Activated B cell treated with CpG ODN at 0.5 μM for 24 hours (primary cell): ENCODE measurements at regions of chr3 and their contacts with region 1.

Region 1: DNA sequence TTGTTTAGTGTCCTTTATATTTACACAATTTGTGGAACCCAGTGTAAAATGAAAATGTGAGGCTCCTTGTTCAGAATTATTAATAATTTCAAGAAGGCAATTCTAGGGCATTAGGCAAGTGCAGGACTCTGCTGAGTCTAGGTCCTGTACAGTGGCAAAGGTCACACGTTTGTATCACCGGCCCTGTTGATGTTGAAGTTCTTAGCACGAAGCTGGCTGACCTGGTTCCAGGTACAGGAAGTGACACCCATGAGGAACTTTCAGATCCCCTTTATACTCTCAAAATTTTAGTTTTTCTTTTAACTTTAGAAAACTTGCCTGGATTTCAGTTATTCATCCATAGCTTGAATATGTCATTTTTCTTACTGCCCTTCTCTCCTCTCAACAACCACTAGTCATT is 349.4 kb downstream of the CNTN6 start:
- DNase-seq: no peak
- ATAC-seq: peak; percentile 76
- H3K4me3 Mint-ChIP-seq: no peak overlapping the region
- H3K27ac Mint-ChIP-seq: peak overlapping the region; percentile 46
- H3K4me1 Mint-ChIP-seq: peaks cover 17% of the 10 kb centered on the region
- H3K27me3 Mint-ChIP-seq: no peaks in the 10 kb centered on the region
- CTCF ChIP-seq: no peak

Region 2: DNA sequence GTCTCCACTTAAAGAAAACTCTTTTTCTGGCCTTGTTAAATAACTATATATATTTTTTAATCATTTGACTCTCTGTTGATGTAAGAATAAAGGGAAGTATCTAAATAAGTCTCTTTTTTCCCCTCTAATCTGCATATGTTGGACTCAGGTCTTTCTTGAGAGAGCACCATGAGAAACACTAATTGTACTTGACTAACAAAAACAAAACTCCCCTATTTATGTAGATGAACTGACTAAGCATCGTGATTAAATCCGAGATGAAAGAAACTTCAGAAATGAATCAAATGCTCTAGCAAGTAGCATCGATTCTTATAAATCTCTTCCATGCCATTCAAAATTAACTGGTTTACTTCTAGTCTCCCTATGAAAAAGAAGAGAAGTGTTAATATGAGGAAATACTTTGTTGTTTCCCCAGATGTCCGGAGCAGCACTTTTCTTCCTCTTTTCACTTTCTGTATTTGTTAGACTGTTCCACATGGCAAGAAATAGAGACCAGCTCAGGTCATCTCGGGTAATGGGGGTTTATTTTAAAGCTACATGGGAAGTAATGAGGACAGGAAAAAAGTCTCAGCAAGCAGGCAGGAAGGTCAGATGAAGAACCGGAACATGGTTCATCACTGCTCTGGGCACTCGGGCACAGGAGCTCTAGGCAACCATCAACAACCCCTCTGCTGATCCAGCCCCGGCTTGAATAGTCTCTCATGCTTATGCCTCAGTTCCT is 61.2 kb before region 1 on chr3:
- CTCF ChIA-PET with region 1: no interaction called
- POLR2A ChIA-PET with region 1: interaction called, 3 read pairs
- intact Hi-C with region 1: loop called (anchors 1 kb)
- DNase-seq: no peak
- ATAC-seq: peak; percentile 82
- H3K4me3 Mint-ChIP-seq: peak overlapping the region; percentile 56
- H3K27ac Mint-ChIP-seq: peak overlapping the region; percentile 86
- H3K4me1 Mint-ChIP-seq: peaks cover 31% of the 10 kb centered on the region
- H3K27me3 Mint-ChIP-seq: no peaks in the 10 kb centered on the region
- CTCF ChIP-seq: no peak

Region 3: DNA sequence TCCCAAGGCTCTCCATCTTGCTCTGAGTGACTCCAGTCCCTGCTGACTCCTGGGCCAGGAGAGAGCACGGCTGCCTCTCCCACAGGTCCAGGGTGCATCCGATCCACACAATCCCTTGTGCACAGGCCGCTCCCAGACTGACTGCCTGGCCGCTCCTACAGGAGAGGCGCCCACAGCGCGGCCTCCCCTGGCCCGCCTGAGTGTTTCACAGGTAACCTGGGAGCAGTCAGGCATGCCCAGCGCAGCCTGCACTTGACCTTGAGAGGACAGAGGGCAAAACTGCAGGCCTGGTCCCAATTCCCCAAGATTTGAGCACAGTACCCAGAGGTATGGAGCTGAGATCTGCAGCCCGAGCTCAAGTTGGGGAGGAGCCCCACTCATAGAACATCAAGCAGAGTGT is 140.8 kb after region 1 on chr3:
- CTCF ChIA-PET with region 1: no interaction called
- POLR2A ChIA-PET with region 1: no interaction called
- intact Hi-C with region 1: no loop called
- DNase-seq: no peak
- ATAC-seq: no peak
- H3K4me3 Mint-ChIP-seq: no peak overlapping the region
- H3K27ac Mint-ChIP-seq: no peak overlapping the region
- H3K4me1 Mint-ChIP-seq: no peaks in the 10 kb centered on the region
- H3K27me3 Mint-ChIP-seq: no peaks in the 10 kb centered on the region
- CTCF ChIP-seq: no peak